ENCODE measurements at regions of chr14 and their contacts with region 1.

Region 1: GRCh38 chr14:75307700-75308379 is 29.2 kb downstream of the FOS start:
- DNase-seq: peak; percentile 73 to 80
- ATAC-seq: peak; percentile 71 to 79
- H3K4me3 ChIP-seq: no peak overlapping the region
- H3K27ac ChIP-seq: no peak overlapping the region
- H3K4me1 ChIP-seq: peaks cover 11 to 26% of the 10 kb centered on the region in 2 donors
- H3K27me3 ChIP-seq: no peaks in the 10 kb centered on the region
- CTCF ChIP-seq: peak; percentile 84 to 94 (median 90)
- POLR2A ChIP-seq: no peak

Region 2: GRCh38 chr14:75132382-75133086 is 175.3 kb before region 1 on chr14:
- in situ Hi-C with region 1: loop called (anchors 5 kb)
- intact Hi-C with region 1: loop called (anchors 1 kb)
- DNase-seq: peak; percentile 32 to 35
- ATAC-seq: peak; percentile 81 to 88
- H3K4me3 ChIP-seq: no peak overlapping the region
- H3K27ac ChIP-seq: peak overlapping the region; percentile 58 to 70 (median 64)
- H3K4me1 ChIP-seq: peaks cover 12 to 14% of the 10 kb centered on the region in 2 donors
- H3K27me3 ChIP-seq: no peaks in the 10 kb centered on the region
- CTCF ChIP-seq: peak; percentile 64 to 86 (median 81)
- POLR2A ChIP-seq: no peak

Region 3: DNA sequence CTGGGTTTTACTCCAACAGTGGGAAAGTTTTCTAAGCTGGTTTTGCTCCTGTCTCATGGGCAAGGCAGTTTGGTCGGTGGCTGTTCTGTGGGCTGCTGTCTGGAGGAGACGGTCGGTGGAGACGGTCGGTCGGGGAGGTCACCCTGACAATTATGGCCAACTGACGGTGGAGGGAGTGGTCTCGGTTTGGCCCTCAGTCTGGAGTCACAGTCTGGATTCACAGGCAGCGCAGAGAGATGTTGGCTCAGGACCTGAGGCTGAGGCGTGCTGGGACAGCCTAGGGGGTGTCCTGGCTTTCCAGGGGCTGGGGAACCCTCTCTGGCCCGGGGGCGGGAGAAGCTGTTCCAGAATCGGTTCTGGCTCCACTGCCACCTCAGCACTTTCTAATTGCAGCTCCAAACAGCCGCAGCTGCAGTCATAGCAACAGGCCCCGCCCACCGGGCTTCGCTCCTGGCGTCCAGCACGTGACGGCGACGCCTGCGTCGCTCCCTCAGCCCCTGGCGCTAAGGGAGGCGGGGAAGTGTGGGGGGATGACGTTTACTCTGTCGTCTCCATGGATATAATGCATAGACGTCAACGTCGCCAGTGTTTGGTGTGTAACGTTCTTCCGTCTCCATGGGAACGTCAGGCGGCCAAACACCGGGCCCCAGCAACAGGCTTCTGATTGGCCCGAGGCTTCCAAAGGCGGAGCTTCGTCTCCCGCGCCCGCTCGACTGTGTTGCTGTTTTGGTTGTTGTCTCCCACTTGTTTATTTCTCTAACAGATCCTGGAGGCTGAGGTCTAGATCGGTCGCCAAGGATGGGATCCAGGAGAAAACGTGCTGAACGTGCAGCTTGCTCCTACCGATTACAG is 49.0 kb before region 1 on chr14:
- in situ Hi-C with region 1: no loop called
- intact Hi-C with region 1: no loop called
- DNase-seq: peak; percentile 97 to 99
- ATAC-seq: peak; percentile 81 to 83
- H3K4me3 ChIP-seq: peak overlapping the region; percentile 43 to 64 (median 54)
- H3K27ac ChIP-seq: peak overlapping the region; percentile 86 to 96 (median 91)
- H3K4me1 ChIP-seq: peaks cover 31 to 45% of the 10 kb centered on the region in 2 donors
- H3K27me3 ChIP-seq: no peaks in the 10 kb centered on the region
- CTCF ChIP-seq: no peak
- POLR2A ChIP-seq: peak; percentile 64 to 82

Region 4: GRCh38 chr14:75418849-75419768 is 111.3 kb after region 1 on chr14:
- in situ Hi-C with region 1: loop called in 2 of 4 experiments (anchors 5 to 10 kb)
- intact Hi-C with region 1: no loop called
- DNase-seq: peak in 1 of 2 donors; percentile 33
- ATAC-seq: peak in 1 of 2 donors; percentile 14
- H3K4me3 ChIP-seq: no peak overlapping the region
- H3K27ac ChIP-seq: no peak overlapping the region
- H3K4me1 ChIP-seq: no peaks in the 10 kb centered on the region
- H3K27me3 ChIP-seq: no peaks in the 10 kb centered on the region
- CTCF ChIP-seq: no peak
- POLR2A ChIP-seq: no peak

Region 5: DNA sequence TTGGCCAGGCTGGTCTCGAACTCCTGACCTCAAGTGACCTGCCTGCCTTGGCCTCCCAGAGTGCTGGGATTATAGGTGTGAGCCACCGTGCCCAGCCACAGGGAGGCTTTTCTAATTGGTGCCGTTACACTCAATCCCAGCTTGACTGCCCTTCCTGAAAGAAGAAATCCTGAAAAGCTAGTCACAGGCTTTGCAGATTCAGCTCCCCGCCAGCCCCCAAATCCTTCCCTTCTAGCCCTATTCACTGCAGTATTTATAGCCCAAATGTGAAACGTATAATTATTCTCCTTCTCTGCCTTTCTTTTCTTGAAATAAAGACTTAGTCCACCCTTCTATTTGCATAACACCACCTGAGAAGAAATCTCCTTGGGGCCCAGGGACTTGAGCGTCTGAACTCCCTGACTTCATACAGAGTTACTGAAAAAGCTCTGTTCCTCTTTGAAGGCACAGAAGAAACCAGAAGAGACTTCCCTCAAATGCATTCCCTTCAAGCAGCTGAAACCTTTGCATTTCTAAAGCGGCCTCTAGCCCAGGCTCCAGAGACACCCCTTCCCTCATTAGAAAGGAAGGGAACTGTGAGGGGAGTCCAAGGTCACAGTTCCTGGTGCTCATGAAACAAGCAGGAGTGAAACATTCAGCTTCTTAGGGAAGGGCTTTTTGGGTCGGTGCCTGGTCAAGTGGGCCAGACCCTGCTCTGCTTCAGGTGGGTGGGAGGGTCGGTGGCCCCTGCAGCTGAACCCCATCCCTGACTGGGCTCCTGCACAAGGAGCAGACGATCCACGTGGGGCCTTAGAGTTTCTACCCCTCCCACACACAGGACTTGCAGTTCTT is 172.1 kb after region 1 on chr14:
- in situ Hi-C with region 1: loop called in 2 of 4 experiments (anchors 5 kb)
- intact Hi-C with region 1: no loop called
- DNase-seq: peak in 1 of 2 donors; percentile 9
- ATAC-seq: no peak
- H3K4me3 ChIP-seq: no peak overlapping the region
- H3K27ac ChIP-seq: no peak overlapping the region
- H3K4me1 ChIP-seq: no peaks in the 10 kb centered on the region
- H3K27me3 ChIP-seq: no peaks in the 10 kb centered on the region
- CTCF ChIP-seq: no peak
- POLR2A ChIP-seq: no peak

Region 6: GRCh38 chr14:75497191-75497590 is 189.4 kb after region 1 on chr14:
- in situ Hi-C with region 1: loop called in 2 of 4 experiments (anchors 5 kb)
- intact Hi-C with region 1: no loop called
- DNase-seq: no peak
- ATAC-seq: no peak
- H3K4me3 ChIP-seq: no peak overlapping the region
- H3K27ac ChIP-seq: no peak overlapping the region
- H3K4me1 ChIP-seq: peaks cover 0 to 3% of the 10 kb centered on the region in 2 donors
- H3K27me3 ChIP-seq: no peaks in the 10 kb centered on the region
- CTCF ChIP-seq: no peak
- POLR2A ChIP-seq: no peak

Measured in gastrocnemius medialis (tissue), 4 donors.